ENCODE measurements at regions of chr19 and their contacts with region 1.

Region 1: GRCh38 chr19:7394731-7395359 is 46.1 kb downstream of the ARHGEF18 start:
- DNase-seq: peak; percentile 97

Region 2: GRCh38 chr19:6534451-6535100 is 860.3 kb before region 1 on chr19:
- intact Hi-C with region 1: loop called in 1 of 2 experiments (anchors 5 kb)
- DNase-seq: no peak

Region 3: DNA sequence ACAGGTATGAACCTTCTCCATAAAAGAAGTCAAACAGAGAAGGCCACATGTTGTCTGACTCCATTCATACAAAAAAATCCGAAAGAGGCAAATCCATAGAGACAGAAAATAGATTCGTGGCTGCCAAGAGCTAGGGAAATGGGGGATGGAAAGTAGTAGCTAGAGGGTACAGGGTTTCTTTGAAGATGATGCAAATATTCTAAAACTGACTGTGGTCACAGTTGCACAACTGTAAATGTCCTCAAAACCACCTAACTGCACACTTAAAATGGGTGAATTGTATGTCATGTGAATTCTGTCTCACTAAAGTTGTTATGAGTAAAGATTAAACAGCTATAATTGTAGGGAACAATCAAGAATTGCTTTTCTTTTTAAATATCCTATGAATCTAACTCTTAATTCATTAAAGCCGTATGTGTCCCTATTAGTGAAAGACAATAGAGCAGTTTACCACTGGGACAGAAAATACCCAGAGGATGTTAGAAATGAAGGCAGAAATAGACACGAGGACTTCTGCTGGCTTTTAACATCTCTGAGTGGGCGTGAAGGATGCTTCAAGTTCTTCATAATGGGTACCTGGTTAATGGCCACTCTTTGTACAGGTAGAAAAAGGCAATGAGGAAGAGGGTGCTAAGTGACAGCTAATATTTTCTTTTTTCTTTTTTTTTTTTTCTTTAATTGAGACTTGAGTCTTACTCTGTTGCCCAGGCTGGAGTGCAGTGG is 121.8 kb before region 1 on chr19:
- intact Hi-C with region 1: no loop called
- DNase-seq: no peak

Region 4: DNA sequence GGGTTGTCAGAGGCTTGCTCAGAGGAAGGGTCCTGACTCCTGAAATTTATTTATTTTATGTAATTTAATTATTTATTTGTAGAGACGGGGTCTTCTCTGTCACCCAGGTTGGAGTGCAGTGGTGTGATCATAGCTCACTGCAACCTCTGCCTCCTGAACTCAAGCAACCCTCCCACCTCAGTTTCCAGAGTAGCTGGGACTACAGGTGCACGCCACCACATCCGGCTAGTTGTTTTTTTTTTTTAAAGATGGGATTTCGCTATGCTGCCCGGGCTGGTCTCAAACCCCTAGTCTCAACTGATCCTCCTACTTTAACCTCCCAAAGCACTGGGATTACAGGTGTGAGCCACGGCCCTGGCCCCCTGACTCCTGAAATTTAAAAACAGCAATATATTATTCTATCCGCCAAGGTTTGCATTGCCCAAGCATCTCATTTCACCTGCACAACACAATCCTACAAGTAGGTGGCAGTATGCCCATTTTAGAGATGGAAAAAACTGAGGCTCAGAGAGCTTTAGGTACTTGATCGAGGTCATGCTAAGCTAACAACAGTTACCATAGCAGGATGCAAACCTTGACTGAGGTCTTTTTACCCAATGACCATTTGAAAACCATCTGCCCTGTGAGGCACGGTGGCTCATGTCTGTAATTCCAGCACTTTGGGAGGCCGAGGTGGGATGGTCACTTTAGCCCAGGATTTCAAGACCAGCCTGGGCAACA is 28.0 kb before region 1 on chr19:
- intact Hi-C with region 1: no loop called
- DNase-seq: no peak

Region 5: DNA sequence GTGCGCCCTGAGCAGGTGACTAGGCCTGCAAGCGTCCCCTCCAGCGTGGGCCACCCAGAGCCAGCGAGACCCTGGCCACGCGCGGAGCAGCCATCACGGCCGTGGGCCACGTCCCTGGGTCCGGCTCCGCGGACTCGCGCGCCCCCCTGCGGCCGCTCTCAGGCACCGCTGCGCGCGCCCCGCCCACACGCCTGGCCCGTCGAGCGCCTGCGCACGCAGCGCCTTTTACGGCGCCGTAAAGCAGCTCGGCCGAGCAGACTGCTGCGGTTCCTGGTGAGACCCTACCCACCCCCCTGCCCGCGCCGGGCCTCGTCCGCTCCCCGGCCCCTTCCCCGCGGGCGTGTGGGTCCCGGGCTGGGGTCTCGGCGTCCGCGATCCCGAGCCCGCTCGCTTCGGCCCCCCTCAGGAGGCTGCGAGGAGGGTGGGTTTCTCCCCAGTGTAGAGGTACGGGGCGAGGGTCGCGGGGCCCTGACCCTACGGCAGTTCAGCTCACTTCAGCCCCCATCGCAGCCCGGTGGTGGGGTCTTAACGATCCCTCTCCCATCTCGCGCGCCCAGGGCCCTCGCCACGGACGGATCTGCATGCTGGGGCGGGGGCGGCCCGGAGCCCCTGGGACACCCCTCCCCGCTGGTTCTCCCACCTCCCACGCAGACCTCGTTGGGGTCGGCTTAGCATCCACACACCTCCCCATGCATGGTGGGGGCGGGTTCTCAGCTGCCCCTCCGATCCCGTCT is 285.9 kb after region 1 on chr19 and contains the start of gene TRAPPC5:
- intact Hi-C with region 1: loop called in 1 of 2 experiments (anchors 5 kb)
- DNase-seq: peak; percentile 95
- total RNA-seq, gene TRAPPC5: 71.9 to 83.5 TPM